ENCODE measurements at regions of chr21 and their contacts with region 1.

Region 1: DNA sequence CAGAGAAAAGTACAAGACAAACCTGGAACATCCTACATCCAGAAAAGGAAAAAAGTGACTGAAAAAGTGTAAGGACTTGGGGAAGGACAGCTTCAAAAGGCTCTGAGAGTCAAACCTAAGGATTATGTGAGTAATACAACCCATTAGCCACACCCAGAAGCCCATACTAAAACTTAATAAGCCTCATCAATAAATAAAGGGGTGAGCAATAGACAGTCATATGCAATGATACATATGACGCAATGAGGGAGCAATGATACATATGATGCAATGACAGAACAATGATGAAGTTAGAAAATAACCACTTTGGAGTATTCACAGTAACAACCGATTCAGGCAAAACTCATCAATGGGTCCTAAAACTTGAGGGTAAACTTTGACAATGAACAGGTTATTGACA is 50.1 kb downstream of the BRWD1 start:
- H3K4me3 Mint-ChIP-seq: no peak overlapping the region
- H3K27ac Mint-ChIP-seq: no peak overlapping the region
- H3K4me1 Mint-ChIP-seq: no peaks in the 10 kb centered on the region
- H3K27me3 Mint-ChIP-seq: no peaks in the 10 kb centered on the region

Region 2: DNA sequence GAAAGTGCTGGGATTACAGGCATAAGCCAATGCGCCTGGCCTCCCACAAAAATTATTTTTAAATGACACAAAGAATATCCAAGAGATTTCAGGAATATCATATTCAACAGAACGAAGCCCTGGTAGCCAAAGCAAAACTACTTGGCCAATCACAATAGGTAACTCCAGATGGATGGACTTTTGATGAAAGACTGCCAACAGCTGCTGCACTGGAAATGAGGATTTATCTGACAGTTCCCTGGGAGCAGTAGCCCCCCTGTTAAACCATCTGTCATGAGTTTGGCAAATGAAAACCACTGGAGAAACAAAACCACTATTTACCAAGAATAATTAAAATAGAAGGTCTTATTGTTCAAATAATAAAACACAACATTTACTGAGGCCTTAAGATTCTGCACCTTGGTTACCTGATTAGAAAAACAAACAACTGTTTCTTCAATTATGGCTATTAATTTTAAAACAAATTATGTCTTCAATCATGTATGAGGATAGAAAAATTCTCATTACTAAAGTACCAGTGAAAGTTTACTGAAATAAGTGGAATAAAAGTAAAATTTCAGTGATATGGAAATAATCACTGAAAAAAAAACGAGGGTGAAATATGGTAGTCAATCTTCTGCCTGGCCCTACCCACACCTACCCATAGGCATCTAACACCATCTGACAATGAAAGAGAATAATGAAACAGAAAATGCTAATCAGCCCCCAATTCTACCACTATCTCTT is 45.9 kb before region 1 on chr21:
- intact Hi-C with region 1: loop called (anchors 10 kb)
- H3K4me3 Mint-ChIP-seq: no peak overlapping the region
- H3K27ac Mint-ChIP-seq: no peak overlapping the region
- H3K4me1 Mint-ChIP-seq: no peaks in the 10 kb centered on the region
- H3K27me3 Mint-ChIP-seq: no peaks in the 10 kb centered on the region